Tibial artery (tissue), 4 donors: ENCODE measurements at regions of chr14 and their contacts with region 1.

Region 1: DNA sequence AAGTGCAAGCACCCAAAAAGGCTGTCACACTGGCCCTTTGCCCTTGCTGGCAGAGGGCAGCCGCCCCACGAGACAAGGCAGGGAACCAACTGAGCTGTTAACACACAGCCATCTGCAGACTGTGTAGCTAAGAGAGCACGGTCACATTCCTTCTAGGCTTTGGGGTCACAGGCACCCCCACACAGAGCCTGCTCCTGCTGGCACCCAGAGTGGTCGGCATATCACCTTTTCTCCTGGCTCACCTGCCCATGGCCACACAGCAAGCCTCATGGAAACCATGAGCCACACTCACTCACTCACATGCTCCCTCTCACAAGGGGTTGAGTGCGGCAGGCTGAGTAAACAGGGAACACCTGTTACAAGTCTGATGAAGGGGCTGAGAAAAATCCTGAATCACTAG is 214.5 kb downstream of the PCNX1 start:
- DNase-seq: no peak
- H3K4me3 ChIP-seq: no peak overlapping the region
- H3K27ac ChIP-seq: no peak overlapping the region
- H3K4me1 ChIP-seq: peaks cover 0 to 16% (median 0%) of the 10 kb centered on the region in 4 donors
- H3K27me3 ChIP-seq: no peaks in the 10 kb centered on the region
- CTCF ChIP-seq: no peak

Region 2: DNA sequence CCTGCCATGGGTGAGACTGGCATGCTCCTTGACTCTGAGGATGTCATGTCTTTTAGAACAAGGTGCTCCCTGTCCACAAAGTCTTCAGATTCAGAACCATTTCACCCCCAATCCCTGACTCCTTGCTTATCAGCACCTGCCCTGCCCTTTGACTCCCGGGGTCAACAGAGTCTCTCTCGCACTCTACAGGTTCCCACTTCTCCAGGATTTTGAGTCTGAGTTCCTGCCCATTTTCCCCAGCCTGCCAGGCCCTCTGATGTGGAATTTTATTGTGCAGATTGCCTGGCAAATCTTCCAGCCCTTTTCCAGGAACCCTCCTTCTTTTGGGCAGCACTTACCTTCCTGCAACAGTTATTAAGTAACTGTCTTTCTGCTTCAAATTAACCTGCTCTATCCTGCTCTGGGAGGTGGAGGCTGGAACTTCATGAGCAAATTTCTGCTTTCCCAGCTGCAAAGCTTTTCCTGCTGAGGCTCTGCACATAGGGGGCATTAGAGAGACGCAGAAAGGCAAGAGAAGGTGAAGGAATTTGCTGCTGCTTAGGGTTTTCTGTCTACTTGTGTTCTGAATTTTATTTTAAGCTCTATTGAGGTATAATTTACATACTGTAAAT is 44.6 kb after region 1 on chr14:
- intact Hi-C with region 1: loop called (anchors 1 kb)
- DNase-seq: no peak
- H3K4me3 ChIP-seq: no peak overlapping the region
- H3K27ac ChIP-seq: no peak overlapping the region
- H3K4me1 ChIP-seq: peaks cover 0 to 6% (median 0%) of the 10 kb centered on the region in 4 donors
- H3K27me3 ChIP-seq: no peaks in the 10 kb centered on the region
- CTCF ChIP-seq: peak; percentile 59 to 64